HEK293 (cell line): ENCODE measurements at regions of chr4 and their contacts with region 1.

Region 1: GRCh38 chr4:57163530-57164459 is 53.6 kb upstream of the IGFBP7 start:
- H3K4me3 ChIP-seq: peak overlapping the region; percentile 48
- H3K27ac ChIP-seq: peak overlapping the region; percentile 53; the same call in 1 of the 2 replicates
- H3K4me1 ChIP-seq: no peaks in the 10 kb centered on the region; the same call in 1 of the 2 replicates
- CTCF ChIP-seq: peak; percentile 91

Region 2: DNA sequence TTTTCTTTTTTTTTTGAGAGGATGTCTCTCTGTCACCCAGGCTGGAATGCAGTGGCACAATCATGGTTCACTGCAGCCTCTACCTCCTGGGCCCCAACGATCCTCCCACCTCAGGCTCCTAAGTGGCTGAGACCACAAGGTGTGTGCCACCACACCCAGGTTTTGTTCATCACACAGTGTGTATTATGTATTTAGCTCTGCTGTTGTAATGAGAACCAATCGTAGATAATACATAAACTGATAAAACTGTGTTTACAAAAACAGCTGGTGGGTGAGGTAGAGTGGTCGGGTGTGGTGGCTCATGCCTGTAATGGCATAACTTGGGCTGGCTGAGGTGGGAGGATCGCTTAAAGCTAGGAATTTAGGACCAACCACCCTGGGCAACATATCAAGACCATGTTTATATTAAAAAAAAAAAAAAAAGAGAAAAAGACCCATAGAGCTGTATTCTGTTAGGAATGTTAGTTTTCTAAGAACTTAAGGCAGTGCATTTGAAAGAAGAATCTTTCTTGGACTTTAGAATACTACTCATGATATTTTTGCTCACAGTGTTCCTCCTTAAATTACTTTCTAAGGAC is 150.2 kb before region 1 on chr4:
- CTCF ChIA-PET with region 1: no interaction called
- POLR2A ChIA-PET with region 1: no interaction called
- H3K4me3 ChIP-seq: no peak overlapping the region
- H3K27ac ChIP-seq: no peak overlapping the region
- H3K4me1 ChIP-seq: no peaks in the 10 kb centered on the region
- CTCF ChIP-seq: no peak

Region 3: DNA sequence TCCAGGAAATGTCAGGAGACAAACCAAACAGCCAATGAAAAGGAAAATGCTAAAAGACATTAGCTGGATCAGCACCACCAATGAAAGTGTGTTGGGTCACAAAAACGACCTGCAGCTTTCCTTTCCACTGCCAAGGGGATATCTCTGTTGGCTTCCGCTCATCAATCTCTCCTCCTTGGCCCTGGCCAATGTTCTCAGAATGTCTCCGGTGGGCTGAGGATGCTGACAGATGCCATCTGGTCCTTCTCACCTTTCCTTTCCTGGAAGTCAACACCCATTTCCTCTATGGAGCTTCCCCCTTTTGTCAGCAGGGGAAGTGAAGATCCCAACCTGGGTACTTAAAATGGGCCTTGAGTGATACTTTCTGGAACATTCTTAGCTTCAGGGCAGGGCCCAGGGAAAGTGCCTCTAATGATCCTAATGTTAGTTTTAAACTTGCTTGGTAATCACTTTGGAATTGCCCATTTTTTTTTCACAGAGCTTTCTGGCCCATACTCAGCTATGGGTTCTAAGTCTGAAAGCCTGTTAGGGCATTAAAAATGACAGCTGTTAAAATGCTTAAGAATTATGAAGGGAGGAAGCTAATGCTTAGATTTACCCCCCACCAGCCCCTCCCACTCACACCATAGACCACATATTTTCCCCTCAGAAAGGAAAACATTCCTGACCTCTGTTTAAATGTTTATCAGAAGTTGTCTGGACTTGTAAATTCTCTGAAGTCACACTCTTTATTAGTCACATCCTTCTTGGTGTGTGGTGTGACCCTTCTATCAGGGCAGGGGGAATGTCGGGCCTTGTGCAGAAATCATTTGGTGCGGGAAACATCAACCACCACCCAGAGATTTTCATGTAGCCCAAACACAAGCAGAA is 82.8 kb before region 1 on chr4:
- CTCF ChIA-PET with region 1: interaction called, 11 read pairs
- POLR2A ChIA-PET with region 1: interaction called, 3 read pairs
- H3K4me3 ChIP-seq: no peak overlapping the region
- H3K27ac ChIP-seq: peak overlapping the region; percentile 69
- H3K4me1 ChIP-seq: peaks cover 8% of the 10 kb centered on the region
- CTCF ChIP-seq: no peak

Region 4: DNA sequence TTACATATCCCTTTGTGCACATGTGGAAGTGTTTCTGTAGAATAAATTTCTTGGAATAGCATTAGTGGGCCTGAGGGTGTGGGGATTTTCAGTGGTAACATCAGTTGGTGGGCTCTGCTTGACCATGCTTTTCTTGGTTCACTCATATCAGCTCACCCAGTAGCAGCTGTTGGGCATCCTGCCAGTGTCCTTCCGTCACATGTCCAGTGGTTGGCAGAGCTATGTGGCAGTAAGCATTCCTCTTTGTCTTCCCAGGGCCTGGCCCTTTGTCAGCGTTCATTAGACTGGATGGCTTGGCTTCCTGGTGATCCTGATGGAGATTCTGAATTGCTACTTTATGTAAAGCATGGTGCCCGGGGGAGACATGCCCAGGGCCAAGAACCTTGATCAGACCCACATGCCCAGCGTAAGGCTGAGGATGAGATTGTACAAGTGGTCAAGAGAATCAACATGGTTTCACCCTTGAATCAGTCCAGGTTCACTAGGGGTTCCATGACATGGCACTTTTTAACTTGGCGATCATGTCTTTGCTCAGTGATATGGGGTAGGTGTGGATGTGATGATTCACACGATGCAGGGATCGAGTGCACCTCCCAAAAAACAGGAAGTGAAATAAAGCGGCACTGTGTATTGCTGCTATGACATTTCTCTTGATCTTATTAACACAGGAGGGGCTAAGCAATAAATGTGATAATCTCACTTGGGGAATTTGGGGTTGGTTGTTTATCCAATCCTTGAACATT is 18.5 kb after region 1 on chr4:
- CTCF ChIA-PET with region 1: interaction called, 10 read pairs
- POLR2A ChIA-PET with region 1: no interaction called
- H3K4me3 ChIP-seq: no peak overlapping the region
- H3K27ac ChIP-seq: no peak overlapping the region
- H3K4me1 ChIP-seq: no peaks in the 10 kb centered on the region
- CTCF ChIP-seq: no peak

Region 5: GRCh38 chr4:57303012-57303751 is 139.4 kb after region 1 on chr4:
- CTCF ChIA-PET with region 1: interaction called, 18 read pairs
- POLR2A ChIA-PET with region 1: no interaction called
- H3K4me3 ChIP-seq: no peak overlapping the region
- H3K27ac ChIP-seq: no peak overlapping the region
- H3K4me1 ChIP-seq: no peaks in the 10 kb centered on the region
- CTCF ChIP-seq: 0 out of 2 replicates have a peak, but pooled peaks have one; percentile 9